Activated CD4-positive, alpha-beta memory T cell treated with anti-CD3 and anti-CD28 coated beads, Interleukin-2, amount 10 ng/mL, durations not matched to agents 7 days and 5 days (primary cell): ENCODE measurements at regions of chr2 and their contacts with region 1.

Region 1: DNA sequence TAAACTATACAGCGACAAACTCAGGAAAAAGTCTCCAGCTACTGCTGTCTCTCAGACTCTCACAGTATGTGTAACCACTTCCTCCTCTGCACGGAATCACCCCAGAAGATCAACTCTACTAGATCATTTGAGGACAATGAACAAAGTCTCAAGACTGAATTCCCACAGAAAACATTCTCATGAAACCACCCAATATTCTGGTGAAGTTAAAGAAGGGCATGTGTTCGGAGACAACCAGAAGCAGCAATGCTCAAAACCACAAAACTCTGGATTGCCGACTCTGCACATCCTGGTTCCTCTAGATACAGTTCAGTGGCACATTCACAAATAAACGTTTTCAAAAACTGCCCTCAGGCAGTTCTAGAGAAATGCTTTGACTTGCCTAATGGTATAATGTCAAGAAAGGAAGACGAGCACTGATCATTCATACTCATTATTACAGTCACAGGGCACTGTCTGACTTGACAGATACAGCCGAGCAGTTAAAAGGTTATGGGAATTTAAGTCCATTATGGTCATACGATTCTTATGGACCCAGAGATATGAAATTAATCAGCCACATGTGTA is 91.9 kb upstream of the STK17B start:
- DNase-seq: peak; percentile 56
- H3K4me3 Mint-ChIP-seq: peak overlapping the region; percentile 76
- H3K27ac Mint-ChIP-seq: peak overlapping the region; percentile 88
- H3K4me1 Mint-ChIP-seq: peaks cover 76% of the 10 kb centered on the region
- H3K27me3 Mint-ChIP-seq: no peaks in the 10 kb centered on the region

Region 2: GRCh38 chr2:196101325-196101991 is 161.8 kb before region 1 on chr2:
- CTCF ChIA-PET with region 1: no interaction called
- POLR2A ChIA-PET with region 1: no interaction called
- DNase-seq: no peak
- H3K4me3 Mint-ChIP-seq: no peak overlapping the region
- H3K27ac Mint-ChIP-seq: no peak overlapping the region
- H3K4me1 Mint-ChIP-seq: peaks cover 14% of the 10 kb centered on the region
- H3K27me3 Mint-ChIP-seq: peaks cover 2% of the 10 kb centered on the region

Region 3: DNA sequence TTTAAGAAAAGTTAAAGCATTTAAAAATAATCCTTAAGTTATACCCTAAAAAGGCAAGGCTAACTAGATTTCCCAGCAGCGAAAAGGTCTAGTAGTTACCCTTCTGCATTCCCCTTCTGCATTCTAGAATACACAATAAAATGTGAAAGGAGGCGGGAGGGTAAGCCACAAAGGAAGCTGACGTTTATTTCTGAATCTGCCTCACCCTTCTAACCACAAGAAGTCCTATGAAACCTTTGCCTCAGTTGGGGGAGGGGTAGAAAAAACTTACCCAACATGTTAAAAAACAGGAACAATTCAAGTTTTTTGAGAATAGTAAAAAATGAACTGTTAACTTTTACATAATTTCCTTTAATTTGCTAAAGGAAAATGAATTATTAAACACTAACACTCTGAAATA is 103.2 kb before region 1 on chr2:
- CTCF ChIA-PET with region 1: interaction called, 4 read pairs
- POLR2A ChIA-PET with region 1: interaction called, 150 read pairs
- DNase-seq: peak; percentile 74
- H3K4me3 Mint-ChIP-seq: peak overlapping the region; percentile 74
- H3K27ac Mint-ChIP-seq: peak overlapping the region; percentile 80
- H3K4me1 Mint-ChIP-seq: peaks cover 71% of the 10 kb centered on the region
- H3K27me3 Mint-ChIP-seq: no peaks in the 10 kb centered on the region

Region 4: DNA sequence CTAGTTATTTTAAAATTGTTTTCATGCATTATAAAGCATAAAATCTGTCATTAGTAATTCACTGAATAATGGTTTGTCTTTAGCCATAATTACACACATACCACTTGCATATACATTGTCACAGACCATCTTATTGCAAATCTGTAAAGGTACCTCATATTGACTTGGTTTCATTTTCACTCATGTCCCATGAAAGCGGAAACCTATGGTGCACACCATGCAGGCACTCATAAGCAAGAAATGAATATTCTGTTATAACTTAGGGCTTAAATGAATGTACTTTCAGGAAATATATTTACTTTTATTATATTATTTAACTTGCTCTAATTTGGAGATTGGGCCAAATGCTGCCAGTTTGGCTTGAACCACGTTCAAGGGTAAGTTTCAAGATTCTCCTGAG is 62.7 kb before region 1 on chr2:
- CTCF ChIA-PET with region 1: interaction called, 4 read pairs
- POLR2A ChIA-PET with region 1: interaction called, 20 read pairs
- DNase-seq: peak; percentile 56
- H3K4me3 Mint-ChIP-seq: peak overlapping the region; percentile 64
- H3K27ac Mint-ChIP-seq: peak overlapping the region; percentile 89
- H3K4me1 Mint-ChIP-seq: peaks cover 56% of the 10 kb centered on the region
- H3K27me3 Mint-ChIP-seq: no peaks in the 10 kb centered on the region

Region 5: DNA sequence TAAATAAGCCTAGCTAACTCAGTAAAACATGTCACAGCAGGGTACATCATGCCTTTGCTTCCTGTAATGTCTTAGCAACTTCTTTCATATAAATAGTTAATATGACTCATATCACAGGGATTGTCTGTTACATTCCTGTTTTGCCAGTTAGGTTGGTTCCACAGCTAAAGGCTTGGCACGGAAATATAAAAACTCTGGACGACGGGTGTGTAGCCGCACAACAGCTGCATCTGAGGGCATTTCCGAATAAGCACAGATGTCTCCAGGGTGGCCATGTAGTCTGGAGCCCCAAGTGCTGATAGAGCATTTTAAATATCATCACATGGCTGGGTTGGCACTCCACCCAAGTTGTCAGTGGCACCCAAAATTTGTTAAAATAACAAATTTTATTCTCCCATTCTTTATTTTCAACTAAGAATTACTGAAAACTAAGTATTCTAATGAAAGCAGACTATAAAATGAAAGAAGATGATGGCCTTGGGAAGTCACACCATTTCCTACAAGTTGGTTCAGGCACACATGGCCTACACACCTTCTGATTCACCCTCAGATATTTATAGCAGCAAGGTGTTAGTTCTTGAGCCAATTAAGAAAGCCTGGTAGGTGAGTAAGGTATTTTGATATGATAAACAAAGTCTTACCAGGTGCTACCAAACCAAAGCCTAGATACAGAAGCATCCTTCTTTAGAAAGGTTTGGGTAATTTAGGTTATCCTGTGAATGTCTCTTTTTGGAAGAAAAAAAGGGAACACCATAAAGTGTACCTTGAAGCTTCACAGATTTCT is 30.1 kb before region 1 on chr2:
- CTCF ChIA-PET with region 1: interaction called, 61 read pairs
- POLR2A ChIA-PET with region 1: interaction called, 343 read pairs
- DNase-seq: no peak
- H3K4me3 Mint-ChIP-seq: no peak overlapping the region
- H3K27ac Mint-ChIP-seq: peak overlapping the region; percentile 85
- H3K4me1 Mint-ChIP-seq: peaks cover 91% of the 10 kb centered on the region
- H3K27me3 Mint-ChIP-seq: no peaks in the 10 kb centered on the region

Region 6: DNA sequence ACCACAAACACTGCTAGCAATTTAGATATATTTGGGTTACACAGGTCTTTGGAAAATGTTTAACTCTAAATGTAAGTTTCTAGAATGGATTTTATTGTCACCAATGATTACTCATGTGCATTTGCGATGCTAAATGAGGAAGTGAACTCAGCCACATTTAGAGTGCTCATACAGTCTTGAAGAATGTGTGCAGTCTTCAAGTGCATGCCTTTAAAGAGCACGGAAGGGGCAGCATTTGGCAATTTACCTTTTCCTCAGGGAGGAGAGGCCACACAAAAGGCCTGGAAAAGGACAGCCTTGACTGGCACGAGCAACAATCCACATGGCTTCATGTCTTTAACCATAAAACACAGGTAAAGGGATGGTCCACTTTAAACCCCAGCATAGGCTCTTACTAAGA is 13.4 kb before region 1 on chr2:
- CTCF ChIA-PET with region 1: interaction called, 19 read pairs
- POLR2A ChIA-PET with region 1: interaction called, 343 read pairs
- DNase-seq: no peak
- H3K4me3 Mint-ChIP-seq: no peak overlapping the region
- H3K27ac Mint-ChIP-seq: no peak overlapping the region
- H3K4me1 Mint-ChIP-seq: peaks cover 62% of the 10 kb centered on the region
- H3K27me3 Mint-ChIP-seq: no peaks in the 10 kb centered on the region

Region 7: GRCh38 chr2:196291873-196292800 is 28.9 kb after region 1 on chr2:
- CTCF ChIA-PET with region 1: no interaction called
- POLR2A ChIA-PET with region 1: no interaction called
- DNase-seq: no peak
- H3K4me3 Mint-ChIP-seq: no peak overlapping the region
- H3K27ac Mint-ChIP-seq: peak overlapping the region; percentile 42
- H3K4me1 Mint-ChIP-seq: peaks cover 54% of the 10 kb centered on the region
- H3K27me3 Mint-ChIP-seq: no peaks in the 10 kb centered on the region

Region 8: DNA sequence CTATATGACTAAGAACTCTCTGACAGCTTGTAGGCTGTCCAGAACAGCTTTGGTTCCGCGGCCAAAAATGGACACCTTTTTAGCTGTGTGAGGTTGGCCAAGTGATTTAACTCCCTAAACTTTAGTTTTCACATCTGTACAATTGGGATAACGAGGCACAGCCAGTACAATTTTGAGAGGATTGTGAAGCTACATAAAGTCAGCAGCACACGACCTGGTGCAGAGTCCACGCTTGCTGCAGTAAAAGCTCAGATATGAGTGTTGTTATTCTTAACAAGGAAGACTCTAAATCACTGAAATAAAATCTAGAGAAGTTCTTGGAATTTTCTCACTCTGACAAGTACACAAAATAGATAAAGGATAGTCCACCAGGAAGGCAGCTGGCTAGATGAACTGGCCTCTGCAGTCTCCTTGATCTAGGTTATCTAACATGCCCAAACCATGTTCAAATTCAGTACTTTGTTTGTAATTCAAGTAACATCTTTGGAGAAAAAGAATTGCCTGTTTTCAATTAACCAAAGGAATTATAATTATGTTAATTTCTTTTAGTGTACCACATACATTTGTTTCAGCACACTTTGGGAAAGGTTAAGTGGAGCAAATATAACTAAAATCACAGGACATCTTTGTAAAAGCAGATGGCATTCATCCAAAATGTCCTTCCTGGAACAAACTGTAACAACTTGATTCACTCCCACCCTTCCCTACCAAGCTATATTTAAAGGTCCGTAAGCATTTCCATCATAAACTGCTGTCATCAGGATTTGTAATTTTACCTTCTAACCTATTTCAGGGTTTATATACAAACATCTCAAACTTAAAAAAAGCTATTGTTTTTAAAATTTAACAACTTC is 109.8 kb after region 1 on chr2:
- CTCF ChIA-PET with region 1: no interaction called
- POLR2A ChIA-PET with region 1: no interaction called
- DNase-seq: no peak
- H3K4me3 Mint-ChIP-seq: no peak overlapping the region
- H3K27ac Mint-ChIP-seq: no peak overlapping the region
- H3K4me1 Mint-ChIP-seq: no peaks in the 10 kb centered on the region
- H3K27me3 Mint-ChIP-seq: peaks cover 5% of the 10 kb centered on the region